ENCODE measurements at regions of chr3 and their contacts with region 1.

Region 1: DNA sequence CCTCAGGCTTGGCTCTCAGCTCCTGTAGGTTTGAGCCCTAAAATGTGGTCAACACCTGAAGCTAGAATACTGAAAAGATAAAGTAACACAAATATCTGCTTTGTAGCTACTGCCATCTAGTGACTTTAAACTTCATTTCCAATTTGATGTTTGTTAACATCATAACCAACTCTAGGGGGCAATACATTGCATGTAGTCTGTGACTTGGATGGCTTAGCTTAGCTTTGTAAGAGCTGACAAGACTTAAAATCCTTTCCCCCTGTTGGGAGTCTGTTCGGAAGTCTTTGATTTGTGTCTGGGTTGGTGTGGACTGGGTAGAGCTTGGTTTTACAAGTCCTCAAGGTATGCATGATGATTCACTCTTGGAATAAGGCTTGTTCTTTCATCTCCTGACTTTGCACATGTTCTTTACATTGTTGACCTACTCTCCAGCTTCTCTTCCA is 51.7 kb downstream of the SCN11A start:
- DNase-seq: peak; percentile 31
- H3K4me3 ChIP-seq: no peak overlapping the region
- H3K27me3 ChIP-seq: no peaks in the 10 kb centered on the region
- CTCF ChIP-seq: peak; percentile 82

Region 2: DNA sequence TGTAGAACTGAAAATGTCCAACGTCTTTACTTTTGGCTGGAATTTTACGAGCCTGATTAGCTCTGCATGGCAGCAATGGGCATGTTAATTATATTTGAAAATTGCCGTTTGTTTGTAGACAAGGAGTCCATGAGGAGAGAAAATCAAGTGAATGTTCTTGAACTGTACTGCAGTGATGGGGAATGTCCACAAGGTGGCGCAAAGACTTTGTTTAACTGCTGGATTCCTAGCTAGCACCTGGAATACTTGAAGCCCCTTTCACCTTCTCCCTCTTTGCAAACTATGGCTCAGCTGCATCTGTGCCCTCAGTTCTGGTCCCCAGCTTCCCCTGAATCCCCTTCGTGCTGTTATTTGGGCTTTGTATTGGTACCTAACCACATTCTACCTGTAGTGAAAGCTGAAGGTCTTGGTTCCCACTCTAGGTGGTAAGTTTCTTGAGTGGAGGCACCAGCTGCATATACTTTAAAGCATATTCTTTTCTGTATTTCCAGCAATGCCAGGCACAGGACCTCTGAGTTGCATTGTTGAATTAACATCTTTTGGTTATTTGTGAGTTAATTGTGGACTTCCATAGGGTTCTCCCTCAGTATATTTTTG is 478.5 kb before region 1 on chr3:
- CTCF ChIA-PET with region 1: interaction called, 20 read pairs
- POLR2A ChIA-PET with region 1: no interaction called
- DNase-seq: no peak
- H3K4me3 ChIP-seq: no peak overlapping the region
- H3K27me3 ChIP-seq: no peaks in the 10 kb centered on the region
- CTCF ChIP-seq: peak; percentile 86

Region 3: GRCh38 chr3:38843898-38844297 is 156.1 kb before region 1 on chr3:
- CTCF ChIA-PET with region 1: interaction called, 11 read pairs
- POLR2A ChIA-PET with region 1: no interaction called
- DNase-seq: no peak
- H3K4me3 ChIP-seq: no peak overlapping the region
- H3K27me3 ChIP-seq: peaks cover 6% of the 10 kb centered on the region
- CTCF ChIP-seq: peak; percentile 58

Region 4: DNA sequence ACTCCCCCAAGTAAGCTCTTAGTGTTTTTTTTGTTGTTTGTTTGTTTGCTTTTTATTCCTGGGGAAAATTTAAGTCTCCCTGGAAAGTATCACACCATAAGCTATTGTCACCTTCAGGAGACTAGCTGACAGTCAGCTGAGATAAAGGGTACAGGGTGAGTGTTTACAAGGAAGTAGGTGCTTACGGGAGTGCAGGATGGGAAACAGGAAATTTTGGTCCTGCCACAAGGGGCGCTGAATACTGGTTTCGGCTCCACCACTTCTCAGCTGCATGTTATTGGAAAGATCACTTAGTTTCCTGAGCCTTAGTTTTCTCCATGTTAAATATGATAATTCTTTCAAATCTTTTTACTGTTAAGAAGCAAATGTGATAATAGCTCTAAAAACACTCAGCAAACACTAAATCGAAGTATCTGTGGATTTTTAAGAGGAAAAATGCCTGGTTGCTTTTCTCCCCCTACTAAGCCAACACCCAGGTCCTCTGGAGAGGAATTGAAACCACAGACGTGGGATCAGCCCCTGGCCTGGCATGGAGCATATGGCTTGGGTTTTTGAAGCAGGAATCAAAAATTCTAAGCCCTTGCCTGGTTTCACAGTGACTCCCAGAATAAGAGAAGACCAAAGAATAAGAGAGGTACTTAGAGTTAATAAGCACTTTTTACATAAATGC is 38.9 kb before region 1 on chr3:
- CTCF ChIA-PET with region 1: interaction called, 15 read pairs
- POLR2A ChIA-PET with region 1: no interaction called
- DNase-seq: peak; percentile 6
- H3K4me3 ChIP-seq: no peak overlapping the region
- H3K27me3 ChIP-seq: no peaks in the 10 kb centered on the region; the same call in 1 of the 2 replicates
- CTCF ChIP-seq: peak; percentile 81

Region 5: GRCh38 chr3:39013289-39013688 is 13.3 kb after region 1 on chr3:
- CTCF ChIA-PET with region 1: interaction called, 20 read pairs
- POLR2A ChIA-PET with region 1: no interaction called
- DNase-seq: no peak
- H3K4me3 ChIP-seq: no peak overlapping the region
- H3K27me3 ChIP-seq: no peaks in the 10 kb centered on the region
- CTCF ChIP-seq: no peak

Region 6: DNA sequence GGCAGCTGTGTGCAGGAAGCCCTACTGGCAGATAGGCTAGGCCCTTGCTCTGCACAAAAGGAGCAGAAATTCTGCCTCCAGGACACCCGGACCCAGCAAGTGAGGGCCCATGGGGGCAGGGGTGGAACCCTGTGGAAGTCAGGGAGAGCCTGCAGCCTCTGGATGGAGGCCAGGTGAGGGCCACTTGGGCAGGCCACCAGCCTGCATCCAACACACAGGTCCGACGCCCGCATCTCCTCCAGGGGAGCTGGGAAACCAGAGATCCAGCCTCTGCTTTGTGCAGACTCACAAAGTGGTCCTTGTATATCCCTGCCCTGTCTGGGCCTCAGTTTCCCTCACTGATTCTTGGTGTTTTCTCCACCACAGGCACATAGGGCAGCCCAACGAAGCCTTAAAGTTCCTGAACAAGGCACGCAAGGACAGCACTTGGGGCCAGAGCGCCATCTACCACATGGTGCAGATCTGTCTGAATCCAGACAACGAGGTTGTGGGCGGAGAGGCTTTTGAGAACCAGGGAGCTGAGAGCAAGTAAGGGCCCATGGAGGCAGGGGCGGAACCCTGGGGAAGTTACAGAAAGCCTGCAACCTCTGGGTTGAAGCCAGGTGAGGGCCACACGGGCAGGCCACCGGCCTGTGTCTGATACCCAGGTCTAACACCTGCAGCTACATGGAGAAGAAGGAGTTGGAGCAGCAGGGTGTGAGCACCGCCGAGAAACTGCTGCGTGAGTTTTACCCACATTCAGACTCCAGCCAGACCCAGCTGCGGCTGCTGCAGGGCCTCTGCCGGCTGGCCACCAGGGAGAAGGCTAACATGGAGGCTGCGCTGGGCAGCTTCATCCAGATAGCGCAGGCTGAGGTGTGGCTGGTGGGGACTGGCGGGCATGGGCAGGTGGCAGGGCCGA is 136.8 kb after region 1 on chr3:
- CTCF ChIA-PET with region 1: no interaction called
- POLR2A ChIA-PET with region 1: no interaction called
- DNase-seq: no peak
- H3K4me3 ChIP-seq: no peak overlapping the region
- H3K27me3 ChIP-seq: no peaks in the 10 kb centered on the region
- CTCF ChIP-seq: no peak